ENCODE measurements at regions of chr12 and their contacts with region 1.

Region 1: GRCh38 chr12:4276524-4277204 is 3.1 kb downstream of the CCND2 start:
- DNase-seq: peak; percentile 84 to 91 (median 89)
- ATAC-seq: peak; percentile 29 to 47 (median 38)
- H3K4me3 ChIP-seq: peak overlapping the region in 10 of 12 donors; percentile 13 to 96 (median 88)
- H3K27ac ChIP-seq: peak overlapping the region in 11 of 12 donors; percentile 88 to 98 (median 95)
- H3K4me1 ChIP-seq: peaks cover 7 to 77% (median 66%) of the 10 kb centered on the region in 12 donors
- H3K27me3 ChIP-seq: peaks cover 0 to 19% (median 0%) of the 10 kb centered on the region in 9 donors
- CTCF ChIP-seq: peak; percentile 73 to 93 (median 88)
- POLR2A ChIP-seq: no peak

Region 2: DNA sequence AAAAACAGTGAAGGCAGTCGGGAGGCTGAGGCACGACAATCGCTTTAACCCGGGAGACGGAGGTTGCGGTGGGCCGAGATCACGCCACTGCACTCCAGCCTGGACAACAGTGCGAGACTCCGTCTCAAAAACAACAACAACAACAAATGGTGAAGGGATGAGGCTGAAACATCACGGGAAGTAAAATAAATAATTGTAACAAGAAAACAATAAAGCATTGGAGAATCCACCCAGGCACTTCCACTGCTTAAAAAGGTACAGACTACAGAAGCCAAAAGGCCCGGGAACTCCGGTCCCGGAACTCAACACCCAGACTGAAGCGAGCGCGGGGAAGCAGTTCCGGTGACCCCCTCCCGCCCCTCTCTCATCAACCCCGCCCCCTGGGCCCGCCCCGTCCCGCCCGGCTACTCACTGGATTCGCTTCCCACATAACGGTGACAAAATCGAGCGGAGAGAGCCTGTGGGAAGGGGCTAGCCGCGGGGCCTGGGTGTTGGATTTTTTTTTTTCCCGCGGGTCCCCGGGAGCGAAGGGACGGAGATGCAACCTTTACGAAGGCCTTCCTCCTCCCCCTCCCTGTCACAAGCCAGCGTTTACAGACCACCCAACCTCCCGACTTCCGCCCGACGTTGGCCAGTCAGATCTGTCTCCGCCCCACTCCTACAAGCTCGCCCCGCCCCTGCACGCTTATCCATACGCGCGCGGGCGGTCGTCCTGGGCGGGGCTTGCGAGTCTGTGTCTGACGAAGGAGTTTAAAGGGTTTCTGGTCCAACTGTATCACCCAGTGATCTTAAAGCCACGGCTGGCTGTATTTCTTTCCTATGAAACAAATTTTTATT is 403.6 kb before region 1 on chr12 and contains the start of gene PARP11:
- intact Hi-C with region 1: loop called in 1 of 10 experiments (anchors 5 kb)
- DNase-seq: peak; percentile 97 to 99 (median 98)
- ATAC-seq: peak; percentile 100
- H3K4me3 ChIP-seq: peak within 1 kb of the TSS; percentile 60 to 87 (median 76)
- H3K27ac ChIP-seq: peak within 1 kb of the TSS; percentile 87 to 96 (median 92)
- H3K4me1 ChIP-seq: peaks cover 0 to 41% (median 19%) of the 10 kb centered on the region in 12 donors
- H3K27me3 ChIP-seq: peaks cover 0 to 4% (median 0%) of the 10 kb centered on the region in 9 donors
- CTCF ChIP-seq: no peak
- POLR2A ChIP-seq: peak in 1 of 2 donors; percentile 66
- total RNA-seq, gene PARP11: 2.8 to 10.5 (median 5.9) TPM

Region 3: DNA sequence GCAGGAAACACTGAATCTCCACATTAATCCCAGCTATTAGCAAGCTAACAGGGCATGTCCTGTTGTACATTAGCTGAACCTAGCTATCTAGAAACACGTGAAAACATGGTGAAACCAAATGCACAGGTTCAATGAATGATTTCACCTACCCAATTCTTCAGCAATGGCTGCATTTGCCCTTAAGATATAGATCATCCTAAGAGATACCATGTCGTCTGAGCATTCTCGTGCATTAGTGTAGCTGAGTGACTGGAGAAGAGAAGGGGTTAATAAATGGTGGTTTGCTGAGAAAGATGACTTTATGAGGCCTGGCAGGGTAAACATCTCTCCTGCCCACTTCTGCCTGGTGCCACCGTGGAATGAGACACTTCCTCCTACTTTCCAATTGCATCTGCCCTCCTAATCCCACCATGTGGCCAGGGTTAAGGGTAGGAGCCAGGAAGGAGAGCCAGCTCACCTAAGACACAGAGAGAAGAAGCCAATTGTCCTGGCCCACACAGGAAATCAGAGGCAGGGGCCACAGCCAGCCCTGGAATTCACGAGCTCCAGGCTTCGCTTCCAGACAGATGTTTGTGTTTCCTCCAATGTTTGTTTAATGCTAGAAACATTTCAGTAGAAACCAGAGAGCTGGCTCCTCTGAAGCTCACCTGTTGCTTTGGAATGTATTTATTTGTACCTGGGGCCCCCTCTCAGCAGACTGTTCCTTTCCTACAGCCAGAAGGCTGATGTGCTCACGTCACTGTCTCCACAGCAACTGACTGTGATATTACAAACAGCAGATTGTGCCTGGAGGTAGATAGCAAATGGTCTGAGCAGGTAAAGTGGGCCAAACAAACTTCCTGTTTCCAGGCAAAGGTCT is 277.5 kb before region 1 on chr12:
- intact Hi-C with region 1: loop called (anchors 1 to 5 kb)
- DNase-seq: no peak
- ATAC-seq: no peak
- H3K4me3 ChIP-seq: no peak overlapping the region
- H3K27ac ChIP-seq: no peak overlapping the region
- H3K4me1 ChIP-seq: no peaks in the 10 kb centered on the region
- H3K27me3 ChIP-seq: peaks cover 0 to 13% (median 0%) of the 10 kb centered on the region in 9 donors
- CTCF ChIP-seq: no peak
- POLR2A ChIP-seq: no peak

Region 4: DNA sequence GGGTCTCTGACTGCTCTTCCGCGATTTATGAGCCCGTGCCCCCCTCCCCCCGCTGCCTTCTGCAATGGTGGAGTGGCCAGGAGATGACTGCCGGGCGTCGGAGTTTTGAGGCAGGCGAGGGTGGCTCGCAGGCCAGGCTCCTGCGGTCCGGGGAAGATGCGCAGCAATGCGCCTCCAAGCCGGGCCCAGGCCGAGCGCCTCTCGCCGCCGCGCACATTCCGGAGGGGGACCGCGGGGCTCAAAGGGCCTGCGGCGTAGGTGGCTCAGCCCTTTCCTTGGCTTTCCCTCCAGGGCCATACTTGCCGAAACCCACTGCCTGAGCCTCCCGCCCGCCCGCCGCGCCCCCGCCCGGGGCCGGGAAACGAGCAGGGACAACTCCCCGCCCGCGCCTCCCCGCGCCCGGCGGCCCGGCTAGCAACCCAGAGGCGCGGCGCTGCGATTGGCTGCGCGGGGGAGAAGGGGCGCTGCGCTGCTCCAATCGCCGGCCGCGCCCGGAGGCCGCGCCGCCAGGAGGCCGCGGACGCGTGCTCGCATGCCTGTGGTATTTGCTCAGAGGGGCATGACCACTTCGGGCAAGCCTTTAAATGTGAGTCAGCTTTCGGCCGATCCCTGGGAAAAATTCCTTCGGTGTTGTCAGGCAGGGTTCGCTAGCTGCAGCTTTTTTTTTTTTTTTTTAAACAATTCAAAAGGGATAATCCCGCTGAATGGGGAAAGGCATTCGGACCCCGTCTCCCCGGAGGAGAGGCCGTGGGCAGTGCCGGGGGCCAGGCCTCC is 245.5 kb before region 1 on chr12:
- intact Hi-C with region 1: loop called in 8 of 10 experiments (anchors 2 to 10 kb)
- DNase-seq: peak; percentile 86 to 92 (median 89)
- ATAC-seq: peak; percentile 86 to 100 (median 98)
- H3K4me3 ChIP-seq: peak overlapping the region; percentile 32 to 67 (median 56)
- H3K27ac ChIP-seq: peak overlapping the region in 10 of 12 donors; percentile 42 to 90 (median 68)
- H3K4me1 ChIP-seq: peaks cover 0 to 22% (median 9%) of the 10 kb centered on the region in 12 donors
- H3K27me3 ChIP-seq: no peaks in the 10 kb centered on the region
- CTCF ChIP-seq: peak in 6 of 12 donors; percentile 7 to 31 (median 20)
- POLR2A ChIP-seq: peak in 1 of 2 donors; percentile 47

Region 5: GRCh38 chr12:4037747-4038312 is 238.8 kb before region 1 on chr12:
- intact Hi-C with region 1: loop called in 8 of 10 experiments (anchors 2 to 10 kb)
- DNase-seq: peak in 1 of 5 donors; percentile 34
- ATAC-seq: peak in 1 of 4 donors; percentile 20
- H3K4me3 ChIP-seq: no peak overlapping the region
- H3K27ac ChIP-seq: no peak overlapping the region
- H3K4me1 ChIP-seq: peaks cover 0 to 2% (median 0%) of the 10 kb centered on the region in 12 donors
- H3K27me3 ChIP-seq: peaks cover 0 to 4% (median 0%) of the 10 kb centered on the region in 9 donors
- CTCF ChIP-seq: peak; percentile 52 to 80 (median 70)
- POLR2A ChIP-seq: no peak

Region 6: GRCh38 chr12:4107436-4107878 is 169.2 kb before region 1 on chr12:
- intact Hi-C with region 1: loop called (anchors 1 to 5 kb)
- DNase-seq: peak in 2 of 5 donors; percentile 27 to 51
- ATAC-seq: peak in 3 of 4 donors; percentile 55 to 71 (median 70)
- H3K4me3 ChIP-seq: no peak overlapping the region
- H3K27ac ChIP-seq: no peak overlapping the region
- H3K4me1 ChIP-seq: peaks cover 0 to 11% (median 0%) of the 10 kb centered on the region in 12 donors
- H3K27me3 ChIP-seq: no peaks in the 10 kb centered on the region
- CTCF ChIP-seq: peak; percentile 20 to 74 (median 50)
- POLR2A ChIP-seq: no peak

Region 7: GRCh38 chr12:4223249-4223845 is 53.3 kb before region 1 on chr12:
- intact Hi-C with region 1: no loop called
- DNase-seq: no peak
- ATAC-seq: no peak
- H3K4me3 ChIP-seq: no peak overlapping the region
- H3K27ac ChIP-seq: no peak overlapping the region
- H3K4me1 ChIP-seq: peaks cover 0 to 19% (median 0%) of the 10 kb centered on the region in 12 donors
- H3K27me3 ChIP-seq: peaks cover 0 to 8% (median 0%) of the 10 kb centered on the region in 9 donors
- CTCF ChIP-seq: no peak
- POLR2A ChIP-seq: no peak

Region 8: DNA sequence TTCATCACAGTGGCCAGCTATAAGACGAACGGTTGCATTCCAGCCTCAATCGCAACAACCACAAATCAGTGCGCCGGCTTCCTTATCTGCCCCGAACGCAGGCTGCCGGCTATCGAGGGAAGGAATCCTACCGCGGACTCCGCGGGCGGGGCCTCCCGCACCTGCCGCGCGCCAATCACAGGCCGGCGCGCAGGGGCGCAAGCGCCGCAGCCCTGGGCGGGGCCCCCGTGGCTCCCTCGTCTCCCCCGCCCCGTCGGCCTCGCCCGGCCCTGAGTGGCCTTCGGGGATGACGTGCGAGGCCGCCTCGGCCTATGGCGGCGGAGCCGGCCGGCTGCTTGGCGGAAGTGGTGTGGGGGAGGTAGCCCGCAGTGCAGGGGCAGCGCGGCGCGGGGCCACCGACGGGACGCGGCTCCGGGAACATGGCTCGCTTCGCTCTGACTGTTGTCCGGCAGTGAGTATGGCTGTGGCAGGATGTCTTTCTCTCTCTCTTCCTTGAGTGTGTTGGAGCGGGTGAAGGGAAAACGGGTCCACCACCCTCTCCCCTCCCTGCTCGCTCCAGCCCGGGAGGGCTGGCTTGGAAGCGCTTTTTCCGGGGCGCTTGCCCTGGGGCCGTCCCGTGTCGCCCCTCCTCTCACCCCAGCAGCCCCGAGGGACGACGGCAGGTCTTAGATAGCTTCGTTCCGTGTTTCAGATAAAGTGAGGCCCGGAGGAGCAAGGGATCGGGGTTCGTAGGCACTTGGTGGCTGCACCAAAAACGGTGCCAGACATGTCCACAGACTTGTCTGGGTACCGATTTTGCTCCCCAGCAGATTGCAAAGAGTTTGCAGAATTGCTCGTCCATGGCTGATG is 44.4 kb after region 1 on chr12 and contains the start of gene TIGAR:
- intact Hi-C with region 1: loop called in 1 of 10 experiments (anchors 5 kb)
- DNase-seq: peak; percentile 95 to 97 (median 96)
- ATAC-seq: peak; percentile 99 to 100 (median 100)
- H3K4me3 ChIP-seq: peak within 1 kb of the TSS; percentile 78 to 99 (median 94)
- H3K27ac ChIP-seq: peak within 1 kb of the TSS; percentile 78 to 95 (median 91)
- H3K4me1 ChIP-seq: peaks cover 4 to 43% (median 16%) of the 10 kb centered on the region in 12 donors
- H3K27me3 ChIP-seq: no peaks in the 10 kb centered on the region
- CTCF ChIP-seq: no peak
- POLR2A ChIP-seq: peak in 1 of 2 donors; percentile 95
- total RNA-seq, gene TIGAR: 6.4 to 16.4 (median 14.0) TPM

Measured in heart left ventricle (tissue), 16 donors.